HEK293 (cell line): ENCODE measurements at regions of chr22 and their contacts with region 1.

Region 1: DNA sequence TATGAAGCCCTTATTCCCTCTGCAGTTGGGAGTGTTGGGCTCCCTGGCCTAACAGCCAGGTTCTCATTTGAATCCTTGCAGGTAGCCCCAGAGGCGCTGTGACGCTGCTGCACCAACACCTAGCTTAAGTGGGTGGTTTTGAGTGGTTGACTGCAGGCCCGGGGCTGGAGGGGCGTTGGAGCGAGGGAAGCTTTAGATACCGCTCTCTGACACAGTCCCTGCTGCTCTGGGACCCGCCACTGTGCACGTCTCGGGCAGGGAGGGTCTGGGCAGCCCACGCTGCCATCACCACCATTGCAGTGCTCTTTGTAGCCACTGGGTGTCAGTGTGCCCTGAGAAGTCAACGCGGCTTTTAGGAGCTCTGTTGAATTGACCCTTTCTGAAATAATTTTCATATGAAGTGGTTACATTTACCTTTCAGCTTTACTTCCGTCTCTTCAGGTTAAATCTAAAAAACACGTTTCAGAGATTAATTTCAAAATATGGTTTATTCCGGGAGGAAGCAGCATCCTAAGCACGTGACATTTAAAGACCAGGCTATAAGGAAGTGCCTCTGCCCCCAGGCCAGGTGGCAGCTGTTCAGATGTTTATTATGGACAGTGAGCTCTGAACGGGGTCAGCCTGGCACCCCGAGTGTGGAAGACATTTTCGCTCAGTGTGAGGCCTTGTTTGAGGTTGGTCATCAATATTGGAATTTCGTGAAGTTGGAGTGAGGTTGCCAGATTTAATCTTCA is 30.9 kb upstream of the PARVB start:
- H3K4me3 ChIP-seq: no peak overlapping the region
- H3K27ac ChIP-seq: no peak overlapping the region
- H3K4me1 ChIP-seq: no peaks in the 10 kb centered on the region
- CTCF ChIP-seq: peak; percentile 46; the same call in 1 of the 2 replicates

Region 2: DNA sequence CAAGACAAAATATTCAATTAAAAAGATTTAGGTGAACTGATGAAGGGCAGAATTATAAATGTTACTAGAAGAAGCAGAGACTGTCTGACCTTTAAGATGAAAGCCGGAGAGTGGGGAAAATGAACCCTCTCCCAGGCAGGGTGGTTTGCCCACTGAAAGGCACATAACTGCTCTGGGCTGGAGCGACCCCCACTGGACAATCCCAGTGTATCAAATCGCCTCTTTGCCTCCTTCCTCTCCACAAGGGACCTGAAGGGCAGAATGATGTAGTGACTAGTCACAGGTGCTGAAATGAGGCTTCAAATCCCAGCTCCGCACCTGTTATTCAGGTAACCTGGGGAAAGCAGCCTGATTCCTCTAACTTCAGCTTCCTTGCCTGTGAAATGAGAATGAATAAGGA is 250.1 kb before region 1 on chr22:
- CTCF ChIA-PET with region 1: no interaction called
- POLR2A ChIA-PET with region 1: no interaction called
- H3K4me3 ChIP-seq: no peak overlapping the region
- H3K27ac ChIP-seq: no peak overlapping the region
- H3K4me1 ChIP-seq: no peaks in the 10 kb centered on the region
- CTCF ChIP-seq: 0 out of 2 replicates have a peak, but pooled peaks have one; percentile 24

Region 3: DNA sequence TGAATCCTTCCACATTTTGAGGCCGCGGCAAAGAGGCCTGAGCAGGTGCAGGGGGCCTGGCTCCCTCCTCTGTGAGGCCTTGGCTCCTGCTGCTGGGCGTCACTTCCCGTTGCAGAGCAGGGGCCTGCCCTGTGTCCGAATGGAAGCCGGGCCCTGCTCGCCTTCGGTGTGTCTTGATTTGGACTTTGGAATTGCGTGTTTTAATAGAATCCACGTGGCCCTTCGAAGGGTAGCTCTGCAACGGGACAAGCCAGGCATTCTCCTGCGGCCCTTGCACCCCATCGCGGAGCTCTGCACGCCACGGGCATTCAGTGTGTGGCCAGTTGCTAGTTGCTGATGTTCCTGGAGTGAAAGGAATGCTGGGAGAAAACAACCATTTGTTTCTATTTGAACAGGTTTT is 12.2 kb before region 1 on chr22:
- CTCF ChIA-PET with region 1: interaction called, 29 read pairs
- POLR2A ChIA-PET with region 1: no interaction called
- H3K4me3 ChIP-seq: no peak overlapping the region
- H3K27ac ChIP-seq: no peak overlapping the region
- H3K4me1 ChIP-seq: no peaks in the 10 kb centered on the region
- CTCF ChIP-seq: no peak

Region 4: DNA sequence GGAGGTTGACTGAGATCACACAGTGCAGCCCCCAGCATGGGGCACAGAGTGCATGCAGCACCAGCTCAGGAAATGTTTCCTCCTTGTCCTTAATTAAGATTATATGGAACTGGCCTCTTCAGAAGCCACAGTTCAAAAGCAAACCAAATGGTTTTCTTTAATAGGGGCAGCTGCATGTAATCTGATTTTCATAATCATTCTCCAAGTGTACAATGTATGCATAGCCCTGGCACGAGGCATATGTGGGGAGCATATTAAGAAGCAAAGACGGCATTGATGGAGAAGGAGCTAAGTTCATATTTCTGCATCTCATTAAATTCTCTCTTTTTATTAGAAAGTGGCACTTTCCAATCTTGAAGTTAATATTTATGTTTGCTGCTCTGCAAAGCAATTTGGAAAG is 21.0 kb after region 1 on chr22:
- CTCF ChIA-PET with region 1: interaction called, 13 read pairs
- POLR2A ChIA-PET with region 1: no interaction called
- H3K4me3 ChIP-seq: no peak overlapping the region
- H3K27ac ChIP-seq: no peak overlapping the region
- H3K4me1 ChIP-seq: no peaks in the 10 kb centered on the region
- CTCF ChIP-seq: no peak

Region 5: GRCh38 chr22:44080936-44081861 is 88.0 kb after region 1 on chr22:
- CTCF ChIA-PET with region 1: interaction called, 120 read pairs
- POLR2A ChIA-PET with region 1: interaction called, 3 read pairs
- H3K4me3 ChIP-seq: no peak overlapping the region
- H3K27ac ChIP-seq: no peak overlapping the region
- H3K4me1 ChIP-seq: no peaks in the 10 kb centered on the region
- CTCF ChIP-seq: peak; percentile 75

Region 6: DNA sequence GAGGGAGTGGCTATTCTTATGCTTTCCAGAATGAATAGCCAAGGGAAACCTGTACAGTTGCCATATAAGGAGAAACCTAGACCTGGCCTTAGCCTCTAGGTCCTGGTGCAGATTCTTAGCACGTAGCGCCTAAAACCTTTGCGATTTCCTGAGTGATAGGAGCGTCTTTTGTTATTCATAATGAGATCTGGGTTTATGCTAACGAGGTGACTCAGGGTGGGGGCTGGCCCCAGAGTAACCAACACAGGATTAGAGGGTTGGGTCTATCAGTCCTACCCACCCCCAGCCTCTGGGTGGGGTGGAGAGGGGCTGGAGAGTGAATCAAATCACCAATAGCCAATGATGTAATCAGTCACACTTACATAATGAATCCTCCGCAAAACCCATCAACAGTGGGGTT is 114.1 kb after region 1 on chr22:
- CTCF ChIA-PET with region 1: no interaction called
- POLR2A ChIA-PET with region 1: no interaction called
- H3K4me3 ChIP-seq: no peak overlapping the region
- H3K27ac ChIP-seq: no peak overlapping the region
- H3K4me1 ChIP-seq: no peaks in the 10 kb centered on the region
- CTCF ChIP-seq: no peak

Region 7: GRCh38 chr22:44209343-44209742 is 216.1 kb after region 1 on chr22:
- CTCF ChIA-PET with region 1: no interaction called
- POLR2A ChIA-PET with region 1: no interaction called
- H3K4me3 ChIP-seq: no peak overlapping the region
- H3K27ac ChIP-seq: no peak overlapping the region
- H3K4me1 ChIP-seq: no peaks in the 10 kb centered on the region
- CTCF ChIP-seq: no peak